ENCODE measurements at regions of chr5 and their contacts with region 1.

Region 1: GRCh38 chr5:151659001-151659754 is 27.5 kb downstream of the SPARC start:
- DNase-seq: peak; percentile 61 to 66
- ATAC-seq: peak; percentile 73 to 76
- H3K4me3 ChIP-seq: no peak overlapping the region
- H3K27ac ChIP-seq: peak overlapping the region in 3 of 4 donors; percentile 17 to 29 (median 19)
- H3K4me1 ChIP-seq: peaks cover 14 to 17% of the 10 kb centered on the region in 2 donors
- H3K27me3 ChIP-seq: no peaks in the 10 kb centered on the region
- CTCF ChIP-seq: peak; percentile 84 to 94 (median 92)
- POLR2A ChIP-seq: no peak

Region 2: GRCh38 chr5:151509231-151509630 is 149.9 kb before region 1 on chr5:
- in situ Hi-C with region 1: no loop called
- intact Hi-C with region 1: loop called (anchors 10 kb)
- DNase-seq: no peak
- ATAC-seq: no peak
- H3K4me3 ChIP-seq: no peak overlapping the region
- H3K27ac ChIP-seq: peak overlapping the region in 2 of 4 donors; percentile 62 to 75
- H3K4me1 ChIP-seq: peaks cover 13 to 16% of the 10 kb centered on the region in 2 donors
- H3K27me3 ChIP-seq: no peaks in the 10 kb centered on the region
- CTCF ChIP-seq: no peak
- POLR2A ChIP-seq: no peak

Region 3: GRCh38 chr5:151523335-151523734 is 135.8 kb before region 1 on chr5:
- in situ Hi-C with region 1: loop called in 1 of 4 experiments (anchors 10 kb)
- intact Hi-C with region 1: no loop called
- DNase-seq: no peak
- ATAC-seq: peak; percentile 34 to 84
- H3K4me3 ChIP-seq: no peak overlapping the region
- H3K27ac ChIP-seq: no peak overlapping the region
- H3K4me1 ChIP-seq: no peaks in the 10 kb centered on the region
- H3K27me3 ChIP-seq: no peaks in the 10 kb centered on the region
- CTCF ChIP-seq: peak; percentile 36 to 63 (median 41)
- POLR2A ChIP-seq: no peak

Region 4: DNA sequence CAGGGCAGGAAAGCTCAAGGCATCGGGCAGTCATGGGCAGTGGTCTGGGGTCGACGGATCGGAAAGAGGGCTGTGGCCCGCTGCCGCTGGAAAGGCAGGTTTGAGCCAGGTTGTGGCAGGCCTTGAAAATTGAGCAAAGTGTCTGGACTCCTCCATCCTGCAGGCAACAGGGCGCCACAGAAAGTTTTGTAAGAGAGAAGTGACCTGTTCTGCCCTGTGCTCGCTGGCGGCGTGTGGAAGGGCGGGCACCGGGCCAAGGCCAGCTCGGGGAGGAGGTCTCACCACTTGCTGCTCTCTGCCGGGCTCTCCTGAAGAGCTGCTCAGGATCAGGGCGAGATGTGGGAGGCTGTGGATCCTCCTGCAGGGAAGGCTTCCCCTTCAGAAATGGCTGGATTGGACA is 26.7 kb before region 1 on chr5:
- in situ Hi-C with region 1: no loop called
- intact Hi-C with region 1: no loop called
- DNase-seq: no peak
- ATAC-seq: no peak
- H3K4me3 ChIP-seq: no peak overlapping the region
- H3K27ac ChIP-seq: no peak overlapping the region
- H3K4me1 ChIP-seq: no peaks in the 10 kb centered on the region
- H3K27me3 ChIP-seq: no peaks in the 10 kb centered on the region
- CTCF ChIP-seq: no peak
- POLR2A ChIP-seq: no peak

Region 5: DNA sequence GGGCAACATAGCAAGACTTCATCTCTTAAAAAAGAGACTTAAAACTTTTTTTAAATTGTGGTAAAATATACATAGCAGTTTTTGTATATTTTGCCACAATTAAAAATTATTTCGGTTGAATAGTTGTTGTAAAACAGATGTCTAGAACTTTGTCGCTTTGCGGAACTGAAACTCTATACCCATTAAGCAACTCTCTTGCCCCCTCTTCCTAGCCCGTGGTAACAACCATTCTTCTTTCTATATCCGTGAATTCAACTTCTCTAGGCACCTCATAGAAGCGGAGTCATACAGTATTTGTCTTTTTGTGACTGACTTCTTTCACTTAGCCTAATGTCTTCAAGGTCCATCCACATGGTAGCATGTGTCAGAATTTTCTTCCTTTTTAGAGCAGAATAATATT is 15.8 kb before region 1 on chr5:
- in situ Hi-C with region 1: no loop called
- intact Hi-C with region 1: no loop called
- DNase-seq: no peak
- ATAC-seq: no peak
- H3K4me3 ChIP-seq: no peak overlapping the region
- H3K27ac ChIP-seq: no peak overlapping the region
- H3K4me1 ChIP-seq: no peaks in the 10 kb centered on the region
- H3K27me3 ChIP-seq: no peaks in the 10 kb centered on the region
- CTCF ChIP-seq: no peak
- POLR2A ChIP-seq: no peak

Region 6: GRCh38 chr5:151684690-151685361 is 25.6 kb after region 1 on chr5:
- in situ Hi-C with region 1: no loop called
- intact Hi-C with region 1: loop called (anchors 2 kb)
- DNase-seq: peak; percentile 36 to 51
- ATAC-seq: peak; percentile 29 to 50
- H3K4me3 ChIP-seq: peak overlapping the region; percentile 66 to 68 (median 66)
- H3K27ac ChIP-seq: peak overlapping the region; percentile 81 to 93 (median 88)
- H3K4me1 ChIP-seq: peaks cover 51 to 65% of the 10 kb centered on the region in 2 donors
- H3K27me3 ChIP-seq: no peaks in the 10 kb centered on the region
- CTCF ChIP-seq: peak in 4 of 5 experiments; percentile 15 to 19 (median 16)
- POLR2A ChIP-seq: peak; percentile 16 to 36

Region 7: GRCh38 chr5:151703227-151703626 is 44.0 kb after region 1 on chr5:
- in situ Hi-C with region 1: no loop called
- intact Hi-C with region 1: loop called (anchors 5 kb)
- DNase-seq: peak; percentile 42 to 63
- ATAC-seq: peak; percentile 91 to 93
- H3K4me3 ChIP-seq: no peak overlapping the region
- H3K27ac ChIP-seq: peak overlapping the region; percentile 74 to 87 (median 81)
- H3K4me1 ChIP-seq: peaks cover 18 to 48% of the 10 kb centered on the region in 2 donors
- H3K27me3 ChIP-seq: no peaks in the 10 kb centered on the region
- CTCF ChIP-seq: no peak
- POLR2A ChIP-seq: peak in 1 of 2 donors; percentile 18

Region 8: DNA sequence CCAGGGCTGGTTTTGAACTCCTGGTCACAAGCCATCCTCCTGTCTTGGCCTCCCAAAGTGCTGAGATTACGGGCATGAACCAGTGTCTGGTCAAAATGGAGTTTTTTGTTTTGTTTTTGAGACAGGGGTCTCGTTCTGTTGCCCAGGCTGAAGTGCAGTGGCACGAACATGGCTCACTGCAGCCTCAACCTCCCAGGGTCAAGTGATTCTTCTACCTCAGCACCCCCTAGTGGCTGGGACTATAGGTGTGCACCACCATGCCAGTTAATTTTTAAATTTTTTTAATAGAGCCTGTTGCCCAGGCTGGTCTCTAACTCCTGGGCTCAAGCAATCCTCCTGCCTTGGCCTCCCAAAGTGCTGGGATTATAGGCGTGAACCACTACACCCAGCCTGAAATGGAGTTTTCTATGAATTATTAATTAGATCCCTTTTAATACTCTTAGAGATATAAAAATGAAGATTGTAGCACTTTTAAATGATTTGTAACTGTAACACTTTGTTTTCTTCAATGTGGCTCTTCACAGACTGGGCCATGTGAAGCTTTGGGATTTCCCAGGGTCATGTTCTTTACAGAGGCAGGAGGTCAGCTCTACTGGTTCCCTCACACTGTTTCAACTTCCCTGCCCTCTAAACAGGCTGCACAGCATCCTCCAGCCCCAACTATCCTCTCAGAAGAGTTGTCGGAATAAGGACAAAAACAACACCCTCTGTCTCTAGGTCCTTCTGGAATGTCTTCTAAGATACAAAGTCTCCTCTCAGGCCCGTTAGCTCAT is 60.2 kb after region 1 on chr5:
- in situ Hi-C with region 1: loop called in 2 of 4 experiments (anchors 10 kb)
- intact Hi-C with region 1: loop called (anchors 1 kb)
- DNase-seq: peak in 1 of 2 donors; percentile 35
- ATAC-seq: peak; percentile 70 to 81
- H3K4me3 ChIP-seq: no peak overlapping the region
- H3K27ac ChIP-seq: no peak overlapping the region
- H3K4me1 ChIP-seq: no peaks in the 10 kb centered on the region
- H3K27me3 ChIP-seq: no peaks in the 10 kb centered on the region
- CTCF ChIP-seq: peak; percentile 53 to 87 (median 82)
- POLR2A ChIP-seq: no peak

Region 9: DNA sequence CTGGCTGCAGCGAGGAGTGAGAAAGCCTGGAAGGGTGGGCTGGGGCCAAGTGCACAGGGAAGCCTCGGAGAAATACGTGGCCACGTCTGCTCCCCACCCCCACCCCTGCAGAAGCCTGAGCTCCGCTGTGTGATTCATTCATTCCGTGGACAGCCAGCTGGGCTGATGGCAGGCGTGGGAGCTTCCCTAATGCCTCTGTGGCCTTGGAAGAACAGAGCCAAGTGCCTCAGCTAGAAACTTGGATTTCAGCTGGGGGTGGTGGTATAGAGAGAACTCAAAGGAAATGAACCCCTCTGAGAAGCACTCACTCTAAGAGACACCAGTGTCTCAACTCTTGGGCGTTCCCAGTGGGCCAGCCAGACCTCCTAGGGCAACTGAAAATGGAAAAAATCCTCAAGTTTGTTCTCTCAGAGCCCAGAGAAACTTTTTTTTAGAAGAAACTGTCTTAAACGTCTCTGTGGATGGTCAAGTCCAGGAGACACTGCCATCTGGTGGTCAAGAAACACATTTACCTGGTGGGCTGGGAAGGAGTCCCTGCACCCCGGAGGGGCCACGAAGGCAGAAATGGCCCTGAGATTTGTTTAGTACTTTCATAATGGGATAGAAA is 81.3 kb after region 1 on chr5:
- in situ Hi-C with region 1: loop called (anchors 5 to 10 kb)
- intact Hi-C with region 1: loop called (anchors 1 kb)
- DNase-seq: peak; percentile 6 to 43
- ATAC-seq: peak; percentile 67 to 83
- H3K4me3 ChIP-seq: peak overlapping the region in 3 of 4 donors; percentile 19 to 34 (median 23)
- H3K27ac ChIP-seq: peak overlapping the region; percentile 29 to 68 (median 47)
- H3K4me1 ChIP-seq: peaks cover 16 to 22% of the 10 kb centered on the region in 2 donors
- H3K27me3 ChIP-seq: no peaks in the 10 kb centered on the region
- CTCF ChIP-seq: peak; percentile 82 to 91 (median 88)
- POLR2A ChIP-seq: no peak